ENCODE measurements at regions of chr21 and their contacts with region 1.

Region 1: GRCh38 chr21:33924079-33924765 is 8.6 kb upstream of the ATP5PO start:
- DNase-seq: peak; percentile 97
- H3K4me3 Mint-ChIP-seq: no peak overlapping the region
- H3K27ac Mint-ChIP-seq: no peak overlapping the region
- H3K4me1 Mint-ChIP-seq: peaks cover 13% of the 10 kb centered on the region
- H3K27me3 Mint-ChIP-seq: no peaks in the 10 kb centered on the region

Region 2: GRCh38 chr21:33636712-33637111 is 287.5 kb before region 1 on chr21:
- intact Hi-C with region 1: no loop called
- DNase-seq: no peak
- H3K4me3 Mint-ChIP-seq: no peak overlapping the region
- H3K27ac Mint-ChIP-seq: no peak overlapping the region
- H3K4me1 Mint-ChIP-seq: peaks cover 16% of the 10 kb centered on the region
- H3K27me3 Mint-ChIP-seq: no peaks in the 10 kb centered on the region

Region 3: DNA sequence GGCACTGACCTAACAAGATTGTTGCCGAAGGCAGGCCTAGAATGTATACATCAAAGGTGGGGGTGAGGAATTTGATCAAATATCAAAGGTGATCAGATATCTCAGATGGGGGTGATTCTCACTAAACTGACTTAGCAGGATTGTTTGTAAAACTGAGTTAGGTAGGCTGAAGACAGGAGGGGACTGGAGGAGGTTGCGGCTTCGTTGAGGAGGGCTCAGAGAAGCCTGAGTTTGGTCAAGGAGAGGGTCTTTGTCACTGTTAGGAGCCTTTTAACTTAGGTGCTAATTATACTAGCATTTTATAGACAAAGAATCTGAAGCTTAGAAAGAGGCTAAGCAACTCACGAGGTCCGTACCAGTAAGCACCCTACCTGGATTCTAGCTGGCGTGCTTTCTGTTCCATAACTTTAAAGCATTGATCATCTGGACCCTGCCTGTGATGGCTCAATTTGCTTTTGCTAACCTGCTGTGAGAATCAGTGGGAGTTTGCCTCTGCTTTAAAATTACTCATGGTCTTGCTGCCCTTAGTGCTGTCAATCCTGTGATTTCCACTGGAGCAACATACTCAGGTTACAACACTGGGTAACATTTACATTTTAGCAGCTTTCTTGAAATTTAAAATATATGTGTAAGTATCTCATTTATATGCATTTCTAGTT is 232.1 kb before region 1 on chr21:
- intact Hi-C with region 1: no loop called
- DNase-seq: peak; percentile 44
- H3K4me3 Mint-ChIP-seq: no peak overlapping the region
- H3K27ac Mint-ChIP-seq: no peak overlapping the region
- H3K4me1 Mint-ChIP-seq: no peaks in the 10 kb centered on the region
- H3K27me3 Mint-ChIP-seq: peaks cover 12% of the 10 kb centered on the region

Region 4: DNA sequence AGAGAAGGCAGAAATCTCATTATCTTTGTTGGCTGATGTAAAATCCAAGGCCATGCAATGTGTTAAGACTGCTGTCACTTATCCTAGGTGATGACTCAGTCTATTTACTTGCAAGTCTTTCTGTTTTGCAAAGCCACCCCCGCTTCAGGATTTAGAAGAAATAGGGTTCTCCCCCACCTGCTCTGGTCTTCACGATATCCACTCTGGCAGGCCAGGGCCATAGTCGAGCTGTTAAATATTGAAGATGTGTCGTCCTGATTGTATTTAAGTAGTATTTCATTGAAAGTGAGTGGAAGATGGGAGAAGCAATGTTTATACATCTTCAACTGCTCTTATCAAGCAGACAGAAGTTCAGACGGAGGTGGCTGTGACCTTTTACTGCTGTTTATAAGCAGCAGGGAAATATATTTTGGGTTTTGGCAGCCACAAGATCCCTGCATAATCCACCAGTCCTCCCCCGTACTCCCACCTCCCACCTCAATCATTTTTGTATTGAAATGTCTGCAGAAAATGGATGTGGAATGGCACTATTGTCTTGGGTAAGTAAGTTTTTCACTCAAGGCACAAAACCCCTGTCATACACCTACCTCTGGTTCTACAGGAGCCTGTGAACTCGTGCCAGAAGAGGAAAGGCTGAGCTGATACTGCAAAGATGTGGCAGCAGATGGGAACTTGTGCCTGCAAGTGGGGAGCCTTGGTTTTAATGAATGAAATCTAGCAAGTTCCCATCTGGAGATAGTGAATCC is 266.5 kb after region 1 on chr21:
- intact Hi-C with region 1: loop called (anchors 5 kb)
- DNase-seq: peak; percentile 58
- H3K4me3 Mint-ChIP-seq: peak overlapping the region; percentile 46
- H3K27ac Mint-ChIP-seq: peak overlapping the region; percentile 88
- H3K4me1 Mint-ChIP-seq: peaks cover 35% of the 10 kb centered on the region
- H3K27me3 Mint-ChIP-seq: no peaks in the 10 kb centered on the region

Region 5: GRCh38 chr21:34243562-34243961 is 319.3 kb after region 1 on chr21:
- intact Hi-C with region 1: loop called (anchors 5 kb)
- DNase-seq: peak; percentile 71
- H3K4me3 Mint-ChIP-seq: no peak overlapping the region
- H3K27ac Mint-ChIP-seq: no peak overlapping the region
- H3K4me1 Mint-ChIP-seq: peaks cover 5% of the 10 kb centered on the region
- H3K27me3 Mint-ChIP-seq: peaks cover 4% of the 10 kb centered on the region

Region 6: GRCh38 chr21:34345091-34345871 is 421.1 kb after region 1 on chr21:
- intact Hi-C with region 1: loop called (anchors 2 kb)
- DNase-seq: no peak
- H3K4me3 Mint-ChIP-seq: no peak overlapping the region
- H3K27ac Mint-ChIP-seq: no peak overlapping the region
- H3K4me1 Mint-ChIP-seq: peaks cover 8% of the 10 kb centered on the region
- H3K27me3 Mint-ChIP-seq: no peaks in the 10 kb centered on the region